T-cell (primary cell): ENCODE measurements at regions of chr5 and their contacts with region 1.

Region 1: GRCh38 chr5:55720188-55720703 is 8.1 kb upstream of the SLC38A9 start:
- DNase-seq: no peak
- ATAC-seq: no peak
- H3K4me3 ChIP-seq: no peak overlapping the region
- H3K4me3 Mint-ChIP-seq: no peak overlapping the region
- H3K27ac ChIP-seq: no peak overlapping the region
- H3K27ac Mint-ChIP-seq: no peak overlapping the region
- H3K4me1 ChIP-seq: no peaks in the 10 kb centered on the region
- H3K4me1 Mint-ChIP-seq: no peaks in the 10 kb centered on the region
- H3K27me3 ChIP-seq: no peaks in the 10 kb centered on the region
- H3K27me3 Mint-ChIP-seq: peaks cover 0 to 6% of the 10 kb centered on the region in 2 donors

Region 2: GRCh38 chr5:56003179-56003578 is 282.9 kb after region 1 on chr5:
- CTCF ChIA-PET with region 1: no interaction called
- POLR2A ChIA-PET with region 1: interaction called in 1 of 2 experiments, 11 read pairs
- DNase-seq: no peak
- ATAC-seq: no peak
- H3K4me3 ChIP-seq: no peak overlapping the region
- H3K4me3 Mint-ChIP-seq: no peak overlapping the region
- H3K27ac ChIP-seq: no peak overlapping the region
- H3K27ac Mint-ChIP-seq: no peak overlapping the region
- H3K4me1 ChIP-seq: peaks cover 10 to 15% of the 10 kb centered on the region in 2 experiments
- H3K4me1 Mint-ChIP-seq: peaks cover 22 to 31% (median 25%) of the 10 kb centered on the region in 3 donors
- H3K27me3 ChIP-seq: no peaks in the 10 kb centered on the region
- H3K27me3 Mint-ChIP-seq: no peaks in the 10 kb centered on the region